ENCODE measurements at regions of chr10 and their contacts with region 1.

Region 1: GRCh38 chr10:73940634-73941221 is 29.8 kb downstream of the PLAU start:
- DNase-seq: peak; percentile 89
- CTCF ChIP-seq: peak; percentile 96

Region 2: DNA sequence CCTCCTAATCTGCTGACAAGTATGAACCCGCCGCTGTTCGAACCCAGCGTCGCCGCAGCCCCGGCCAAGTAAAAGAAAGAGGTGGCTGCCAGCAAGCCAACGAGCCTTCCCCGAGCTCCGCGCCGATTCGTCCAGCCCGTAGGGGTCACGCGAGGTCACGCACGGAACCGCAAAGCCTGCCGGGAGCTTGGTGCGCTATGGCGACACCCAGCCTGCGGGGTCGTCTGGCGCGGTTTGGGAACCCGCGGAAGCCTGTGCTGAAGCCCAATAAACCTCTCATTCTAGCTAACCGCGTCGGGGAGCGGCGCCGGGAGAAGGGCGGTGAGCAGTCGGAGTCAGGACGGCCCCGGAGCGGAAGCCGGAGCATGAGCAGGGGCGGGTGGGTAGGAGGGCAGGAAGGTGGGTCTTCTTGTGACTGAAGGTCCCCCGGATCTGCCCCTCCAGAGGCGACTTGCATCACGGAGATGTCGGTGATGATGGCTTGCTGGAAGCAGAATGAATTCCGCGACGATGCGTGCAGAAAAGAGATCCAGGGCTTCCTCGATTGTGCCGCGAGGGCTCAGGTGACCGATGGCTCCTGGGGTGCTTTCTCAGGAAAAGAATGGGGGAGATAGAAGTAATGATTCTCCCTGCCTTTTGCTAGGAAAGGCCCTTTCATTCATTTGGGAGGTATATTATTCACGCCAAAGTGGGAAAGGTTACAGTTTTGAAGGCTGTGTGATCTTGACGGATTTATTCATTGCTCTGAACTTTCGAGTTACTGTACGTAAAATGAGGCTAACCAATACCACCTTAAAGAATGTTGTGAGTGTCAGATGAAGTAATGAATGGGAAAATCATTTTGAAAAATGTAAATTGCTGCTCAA is 158.6 kb before region 1 on chr10 and contains the start of gene CHCHD1:
- CTCF ChIA-PET with region 1: no interaction called
- POLR2A ChIA-PET with region 1: no interaction called
- DNase-seq: peak; percentile 89
- CTCF ChIP-seq: no peak

Region 3: GRCh38 chr10:73848821-73849489 is 91.8 kb before region 1 on chr10:
- CTCF ChIA-PET with region 1: interaction called, 26 read pairs
- POLR2A ChIA-PET with region 1: no interaction called
- DNase-seq: peak; percentile 93
- CTCF ChIP-seq: peak; percentile 99

Region 4: GRCh38 chr10:73894245-73894971 is 46.3 kb before region 1 on chr10:
- CTCF ChIA-PET with region 1: interaction called, 566 read pairs
- POLR2A ChIA-PET with region 1: no interaction called
- DNase-seq: no peak
- CTCF ChIP-seq: no peak

Region 5: DNA sequence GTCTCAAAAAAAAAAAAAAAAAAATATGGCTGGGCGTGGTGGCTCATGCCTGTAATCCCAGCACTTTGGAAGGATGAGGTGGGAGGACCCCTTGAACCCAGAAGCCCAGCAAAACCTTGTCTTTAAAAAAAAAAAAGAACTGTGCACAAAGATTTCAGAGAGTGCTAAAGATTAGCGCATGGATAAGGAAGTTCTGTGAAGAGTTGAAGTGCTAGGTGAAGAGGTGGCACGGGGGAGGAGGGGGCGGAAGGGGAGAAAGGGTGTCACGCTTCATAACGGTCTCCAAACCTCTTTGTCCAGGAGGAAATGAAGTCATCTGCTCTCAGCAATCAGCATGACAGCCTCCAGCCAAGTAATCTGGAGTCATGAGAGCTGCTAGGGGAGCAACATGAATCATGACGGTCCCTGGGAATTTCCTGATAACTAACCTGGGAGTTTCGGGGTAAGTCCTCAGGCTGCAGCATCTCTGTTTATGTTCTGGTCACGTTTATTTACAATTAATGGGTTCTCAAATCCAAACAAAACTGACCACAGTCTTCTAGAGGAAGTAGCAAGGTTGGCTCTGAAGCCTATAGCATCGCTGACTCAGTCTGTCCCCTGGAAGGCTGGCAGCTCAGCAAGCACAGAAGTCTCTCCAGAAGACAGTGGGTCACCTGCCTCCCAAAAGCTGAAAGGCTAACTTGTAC is 31.7 kb before region 1 on chr10:
- CTCF ChIA-PET with region 1: interaction called, 16 read pairs
- POLR2A ChIA-PET with region 1: no interaction called
- DNase-seq: peak; percentile 69
- CTCF ChIP-seq: no peak

Region 6: DNA sequence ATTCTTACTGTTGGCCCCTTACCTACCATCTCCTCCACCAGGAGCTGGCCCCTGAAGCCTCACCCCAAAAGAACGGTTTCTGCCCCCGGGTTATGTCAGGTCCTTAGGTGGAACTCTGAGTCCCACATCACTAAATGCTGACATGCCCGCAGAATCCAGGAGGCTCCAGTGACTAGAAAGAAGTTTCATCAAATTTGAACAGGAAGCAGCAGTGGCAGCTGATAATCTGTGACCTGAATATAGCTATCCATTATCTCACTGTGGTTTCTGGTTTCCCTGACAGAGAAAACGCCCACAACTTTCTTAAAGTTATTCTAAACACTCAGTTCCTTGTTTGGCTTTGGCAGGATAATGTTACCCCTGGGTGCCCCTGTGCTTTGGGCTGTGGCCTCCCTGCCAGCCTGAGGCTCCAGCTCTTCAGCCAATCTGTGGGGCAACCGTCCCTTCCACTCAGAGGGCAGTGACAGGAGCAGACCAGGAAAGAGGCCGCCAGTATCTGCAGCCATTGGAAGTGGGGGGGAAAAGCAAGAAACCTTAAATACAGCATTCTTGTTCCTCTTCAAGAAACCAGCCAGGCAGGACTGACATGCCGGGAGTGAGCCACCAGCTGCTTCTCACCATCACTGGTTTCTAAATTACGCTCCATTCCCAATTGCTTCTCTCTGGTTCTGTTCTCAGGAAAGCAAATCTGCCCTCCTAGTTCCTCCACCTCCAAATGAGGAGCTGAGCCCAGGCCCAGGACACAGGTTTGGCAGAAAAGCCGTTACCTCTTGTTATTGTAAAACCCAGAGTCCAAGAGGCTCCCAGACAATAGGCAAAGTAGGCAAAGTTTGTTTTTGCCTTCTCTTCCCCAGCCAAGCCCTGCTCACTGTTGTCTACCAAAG is 16.0 kb after region 1 on chr10:
- CTCF ChIA-PET with region 1: interaction called, 47 read pairs
- POLR2A ChIA-PET with region 1: no interaction called
- DNase-seq: peak; percentile 69
- CTCF ChIP-seq: no peak

Region 7: GRCh38 chr10:74677951-74678350 is 737.2 kb after region 1 on chr10:
- CTCF ChIA-PET with region 1: no interaction called
- POLR2A ChIA-PET with region 1: no interaction called
- DNase-seq: peak; percentile 66
- CTCF ChIP-seq: no peak